AG04450 (cell line): ENCODE measurements at regions of chr4 and their contacts with region 1.

Region 1: DNA sequence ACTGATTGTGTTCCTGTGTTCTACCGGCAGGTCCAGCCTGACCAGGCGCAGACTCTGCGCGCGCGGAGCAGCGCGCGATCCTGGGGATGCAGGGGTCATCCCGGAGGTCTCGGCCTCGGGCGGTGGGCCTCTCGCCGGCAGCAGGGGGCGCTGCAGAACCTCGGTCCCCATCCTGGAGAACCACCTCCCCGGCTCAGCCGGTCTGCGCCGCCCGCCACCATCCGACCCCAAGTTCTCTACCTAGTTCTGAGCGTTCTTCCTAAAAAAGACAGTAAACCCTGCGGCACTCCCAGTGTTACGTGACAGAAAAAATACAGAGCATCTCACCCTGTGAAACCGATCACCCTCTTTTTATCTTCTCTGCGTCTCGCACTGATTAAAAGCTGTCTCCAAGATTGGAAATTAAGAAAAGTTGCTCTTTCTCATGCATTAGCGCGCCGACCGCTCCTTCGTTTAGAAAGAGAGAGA is 1.6 kb downstream of the TRPC3 start:
- DNase-seq: peak; percentile 43
- H3K4me3 ChIP-seq: peak overlapping the region; percentile 68
- H3K27ac ChIP-seq: no peak overlapping the region
- H3K27me3 ChIP-seq: no peaks in the 10 kb centered on the region
- CTCF ChIP-seq: peak; percentile 87

Region 2: DNA sequence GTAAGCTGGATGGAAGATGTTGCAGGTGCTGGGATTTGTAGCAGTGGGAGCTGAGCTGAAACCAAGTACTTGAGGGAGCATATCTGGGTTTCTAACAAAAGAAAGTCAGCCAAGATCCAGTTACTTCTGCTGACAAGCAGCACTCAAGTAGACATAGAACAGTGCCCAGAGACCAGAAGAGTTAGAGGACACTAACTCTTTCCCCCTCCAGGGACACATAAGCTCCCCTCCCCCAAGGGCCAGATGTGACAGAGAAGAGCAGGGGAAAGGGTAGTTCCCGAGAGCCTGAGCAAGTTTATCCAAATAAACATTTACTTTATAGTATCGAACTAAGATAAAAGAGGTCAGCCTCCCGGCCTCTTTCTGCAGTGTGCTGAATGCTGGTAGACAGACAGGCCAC is 10.6 kb before region 1 on chr4:
- CTCF ChIA-PET with region 1: interaction called, 12 read pairs
- POLR2A ChIA-PET with region 1: no interaction called
- DNase-seq: no peak
- H3K4me3 ChIP-seq: no peak overlapping the region
- H3K27ac ChIP-seq: no peak overlapping the region
- H3K27me3 ChIP-seq: no peaks in the 10 kb centered on the region
- CTCF ChIP-seq: no peak

Region 3: GRCh38 chr4:122017296-122017695 is 67.0 kb after region 1 on chr4:
- CTCF ChIA-PET with region 1: no interaction called
- POLR2A ChIA-PET with region 1: no interaction called
- DNase-seq: no peak
- H3K4me3 ChIP-seq: no peak overlapping the region
- H3K27ac ChIP-seq: no peak overlapping the region
- H3K27me3 ChIP-seq: no peaks in the 10 kb centered on the region
- CTCF ChIP-seq: no peak

Region 4: DNA sequence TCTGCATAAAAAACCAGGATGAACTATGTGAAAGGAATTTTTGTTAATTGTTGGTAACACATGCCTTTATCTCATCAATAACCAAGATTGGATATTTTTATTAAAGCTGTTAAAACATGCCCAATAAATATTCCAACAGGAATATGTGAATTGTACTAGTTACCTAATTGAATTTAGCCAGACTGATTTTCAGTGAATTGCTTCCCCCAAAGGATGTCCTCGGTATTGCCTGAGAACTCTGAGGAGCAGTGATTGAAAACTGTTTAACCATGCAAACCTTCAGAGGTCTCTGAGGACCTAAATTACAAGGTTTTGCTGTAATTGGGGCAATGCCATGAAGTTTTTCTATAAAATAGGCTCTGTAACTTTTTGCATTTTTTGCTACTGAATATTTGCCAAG is 268.5 kb after region 1 on chr4:
- CTCF ChIA-PET with region 1: interaction called, 15 read pairs
- POLR2A ChIA-PET with region 1: no interaction called
- DNase-seq: no peak
- H3K4me3 ChIP-seq: no peak overlapping the region
- H3K27ac ChIP-seq: no peak overlapping the region
- H3K27me3 ChIP-seq: no peaks in the 10 kb centered on the region
- CTCF ChIP-seq: peak; percentile 59